ENCODE measurements at regions of chr22 and their contacts with region 1.

Region 1: DNA sequence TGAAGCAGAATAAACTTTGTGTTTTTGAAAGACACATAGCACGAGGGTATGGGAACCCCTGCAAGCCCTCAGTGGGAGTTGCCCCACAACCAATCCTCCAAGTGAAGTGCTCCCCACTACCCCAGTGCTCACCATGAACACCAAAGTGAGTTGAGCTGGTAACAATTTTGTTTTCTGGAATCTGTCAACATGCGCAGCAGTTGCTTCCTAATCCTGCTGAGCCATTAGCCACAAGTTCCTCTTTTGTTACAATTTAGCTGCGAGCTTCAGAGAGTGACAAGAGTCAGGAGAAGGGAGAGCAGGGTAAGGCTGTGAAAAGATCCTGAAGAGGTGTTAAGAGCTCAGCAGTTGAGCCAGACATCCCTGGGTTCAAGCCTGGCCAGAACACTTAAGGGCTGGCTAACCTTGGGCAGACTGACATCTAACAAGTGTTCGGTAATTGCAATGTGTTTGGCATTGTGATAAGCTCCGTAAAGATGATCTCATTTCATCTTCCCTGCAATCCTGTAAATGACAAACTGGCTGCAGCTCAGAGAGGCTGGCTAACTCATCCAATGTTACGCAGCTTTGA is 24.1 kb upstream of the ASPHD2 start:
- DNase-seq: no peak
- ATAC-seq: peak; percentile 31; the same call in 2 of the 3 replicates
- H3K4me3 ChIP-seq: no peak overlapping the region
- H3K27ac ChIP-seq: no peak overlapping the region
- H3K4me1 ChIP-seq: no peaks in the 10 kb centered on the region; the same call in 1 of the 2 replicates
- H3K27me3 ChIP-seq: no peaks in the 10 kb centered on the region
- CTCF ChIP-seq: no peak
- EP300 ChIP-seq: no peak
- POLR2A ChIP-seq: no peak
- RAD21 ChIP-seq: no peak

Region 2: DNA sequence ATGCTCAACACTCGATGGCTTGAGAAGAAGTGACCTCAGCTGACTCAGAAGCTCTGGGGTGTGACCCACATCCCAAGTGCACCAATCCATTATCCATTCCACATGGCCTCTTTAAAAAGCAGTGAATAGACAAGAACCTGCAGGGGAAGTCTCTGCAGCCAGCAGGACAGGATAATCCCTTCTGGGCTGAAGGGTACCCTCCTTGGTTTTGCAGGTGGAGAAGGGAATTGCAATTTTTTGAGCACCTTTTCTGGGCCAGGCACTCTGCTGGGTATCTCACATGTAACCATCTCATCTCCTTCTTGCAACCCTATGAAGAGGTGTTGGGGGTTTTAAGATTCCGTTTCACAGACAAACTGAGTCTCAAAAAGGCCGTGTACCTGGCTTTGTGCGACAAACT is 586.4 kb before region 1 on chr22:
- CTCF ChIA-PET with region 1: no interaction called
- POLR2A ChIA-PET with region 1: no interaction called
- RAD21 ChIA-PET with region 1: no interaction called
- SMC1A ChIA-PET with region 1: no interaction called
- in situ Hi-C with region 1: no loop called
- intact Hi-C with region 1: no loop called
- DNase-seq: no peak
- ATAC-seq: no peak
- H3K4me3 ChIP-seq: no peak overlapping the region
- H3K27ac ChIP-seq: no peak overlapping the region
- H3K4me1 ChIP-seq: no peaks in the 10 kb centered on the region
- H3K27me3 ChIP-seq: no peaks in the 10 kb centered on the region; a peak in 2 of 4 replicates
- CTCF ChIP-seq: no peak
- EP300 ChIP-seq: no peak
- POLR2A ChIP-seq: no peak
- RAD21 ChIP-seq: no peak

Region 3: DNA sequence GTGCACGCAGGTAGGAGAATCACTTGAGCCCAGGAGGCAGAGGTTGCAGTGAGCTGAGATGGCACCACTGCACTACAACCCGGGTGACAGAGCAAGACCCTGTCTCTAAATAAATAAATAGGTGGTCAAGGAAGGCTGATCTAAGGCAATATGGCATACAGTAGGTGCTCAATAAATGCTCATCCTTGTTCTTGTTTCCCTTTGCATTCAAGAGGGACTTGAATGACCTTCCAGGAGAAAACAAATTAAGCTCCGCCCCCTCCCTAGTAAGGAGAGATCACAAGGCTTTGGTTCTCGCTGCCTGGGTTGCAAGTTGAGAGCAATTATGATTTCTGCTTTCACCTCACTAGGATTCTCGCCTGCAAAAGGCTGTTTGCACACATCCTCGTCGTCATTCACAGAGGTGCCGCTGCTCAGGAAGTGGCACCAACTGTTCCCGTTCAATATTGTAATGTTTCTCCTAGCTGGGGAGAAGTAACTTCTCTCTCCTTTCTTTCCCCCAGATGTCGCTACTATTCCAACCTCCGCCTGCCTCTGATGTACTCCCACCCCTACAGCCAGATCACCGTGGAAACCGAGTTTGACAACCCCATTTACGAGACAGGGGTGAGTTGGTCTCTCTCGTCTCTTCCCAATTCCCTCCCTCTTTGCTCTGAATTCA is 27.6 kb before region 1 on chr22:
- CTCF ChIA-PET with region 1: no interaction called
- POLR2A ChIA-PET with region 1: no interaction called
- RAD21 ChIA-PET with region 1: no interaction called
- SMC1A ChIA-PET with region 1: no interaction called
- in situ Hi-C with region 1: no loop called
- intact Hi-C with region 1: no loop called
- DNase-seq: no peak
- ATAC-seq: no peak
- H3K4me3 ChIP-seq: no peak overlapping the region
- H3K27ac ChIP-seq: no peak overlapping the region
- H3K4me1 ChIP-seq: no peaks in the 10 kb centered on the region
- H3K27me3 ChIP-seq: peaks cover 3 to 9% of the 10 kb centered on the region in 2 experiments
- CTCF ChIP-seq: no peak; a peak in 1 of 6 replicates
- EP300 ChIP-seq: no peak
- POLR2A ChIP-seq: no peak
- RAD21 ChIP-seq: no peak

Region 4: GRCh38 chr22:26416670-26417250 is 11.8 kb after region 1 on chr22:
- CTCF ChIA-PET with region 1: interaction called, 10 read pairs
- POLR2A ChIA-PET with region 1: no interaction called
- RAD21 ChIA-PET with region 1: no interaction called
- SMC1A ChIA-PET with region 1: interaction called, 13 read pairs
- in situ Hi-C with region 1: no loop called
- intact Hi-C with region 1: no loop called
- DNase-seq: no peak
- ATAC-seq: no peak
- H3K4me3 ChIP-seq: no peak overlapping the region
- H3K27ac ChIP-seq: no peak overlapping the region
- H3K4me1 ChIP-seq: no peaks in the 10 kb centered on the region
- H3K27me3 ChIP-seq: peaks cover 0 to 1% of the 10 kb centered on the region in 2 experiments; a peak in 3 of 4 replicates
- CTCF ChIP-seq: no peak
- EP300 ChIP-seq: no peak
- POLR2A ChIP-seq: no peak
- RAD21 ChIP-seq: no peak

Measured in GM12878 (cell line).